ENCODE measurements at regions of chr2 and their contacts with region 1.

Region 1: GRCh38 chr2:69914170-69914960 is 544 bp upstream of the MXD1 start:
- DNase-seq: peak; percentile 98
- CTCF ChIP-seq: peak; percentile 43

Region 2: GRCh38 chr2:69893684-69894551 is 20.4 kb before region 1 on chr2 and contains the start of gene SNRNP27:
- CTCF ChIA-PET with region 1: interaction called, 15 read pairs
- POLR2A ChIA-PET with region 1: interaction called, 5 read pairs
- DNase-seq: peak; percentile 84
- CTCF ChIP-seq: no peak

Region 3: DNA sequence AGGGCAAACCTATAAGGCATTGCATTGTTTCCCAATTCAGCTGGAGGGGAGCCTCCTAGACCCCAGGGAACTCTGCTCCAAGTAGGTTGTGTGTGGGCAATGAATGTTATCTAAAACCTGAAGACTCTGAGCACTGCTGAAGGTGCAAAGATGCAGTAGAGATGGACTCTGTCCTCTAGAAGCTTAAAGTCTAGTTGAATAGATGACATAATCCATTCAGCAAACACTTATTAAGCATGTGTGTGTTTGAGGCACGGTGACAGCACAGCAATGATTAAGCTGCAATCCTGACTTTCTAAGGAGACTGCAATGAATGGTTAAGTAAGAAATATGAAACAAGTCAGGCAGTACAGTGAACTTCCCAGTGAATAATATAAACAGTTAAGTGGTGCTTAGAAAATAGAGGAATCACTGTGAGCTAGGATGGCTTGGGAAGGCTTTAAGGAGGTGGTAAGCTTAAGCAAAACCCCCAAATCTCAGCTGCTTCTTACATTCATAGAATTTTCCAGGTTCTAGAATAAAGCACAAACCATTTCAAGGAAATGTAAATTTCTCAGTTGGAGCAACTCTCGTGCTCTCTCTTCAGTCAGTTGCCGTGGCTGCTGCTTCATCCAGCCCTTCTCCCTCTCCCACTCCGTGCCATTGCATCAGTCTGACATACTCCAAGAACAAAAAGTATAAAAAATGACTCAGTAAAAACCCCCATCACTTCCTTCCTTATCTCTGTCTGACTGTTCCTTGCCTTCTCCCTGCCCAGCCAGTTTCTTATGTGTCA is 19.7 kb after region 1 on chr2:
- CTCF ChIA-PET with region 1: interaction called, 5 read pairs
- POLR2A ChIA-PET with region 1: interaction called, 10 read pairs
- DNase-seq: no peak
- CTCF ChIP-seq: no peak

Region 4: GRCh38 chr2:69955029-69955428 is 40.7 kb after region 1 on chr2:
- CTCF ChIA-PET with region 1: no interaction called
- POLR2A ChIA-PET with region 1: no interaction called
- DNase-seq: no peak
- CTCF ChIP-seq: no peak

Region 5: DNA sequence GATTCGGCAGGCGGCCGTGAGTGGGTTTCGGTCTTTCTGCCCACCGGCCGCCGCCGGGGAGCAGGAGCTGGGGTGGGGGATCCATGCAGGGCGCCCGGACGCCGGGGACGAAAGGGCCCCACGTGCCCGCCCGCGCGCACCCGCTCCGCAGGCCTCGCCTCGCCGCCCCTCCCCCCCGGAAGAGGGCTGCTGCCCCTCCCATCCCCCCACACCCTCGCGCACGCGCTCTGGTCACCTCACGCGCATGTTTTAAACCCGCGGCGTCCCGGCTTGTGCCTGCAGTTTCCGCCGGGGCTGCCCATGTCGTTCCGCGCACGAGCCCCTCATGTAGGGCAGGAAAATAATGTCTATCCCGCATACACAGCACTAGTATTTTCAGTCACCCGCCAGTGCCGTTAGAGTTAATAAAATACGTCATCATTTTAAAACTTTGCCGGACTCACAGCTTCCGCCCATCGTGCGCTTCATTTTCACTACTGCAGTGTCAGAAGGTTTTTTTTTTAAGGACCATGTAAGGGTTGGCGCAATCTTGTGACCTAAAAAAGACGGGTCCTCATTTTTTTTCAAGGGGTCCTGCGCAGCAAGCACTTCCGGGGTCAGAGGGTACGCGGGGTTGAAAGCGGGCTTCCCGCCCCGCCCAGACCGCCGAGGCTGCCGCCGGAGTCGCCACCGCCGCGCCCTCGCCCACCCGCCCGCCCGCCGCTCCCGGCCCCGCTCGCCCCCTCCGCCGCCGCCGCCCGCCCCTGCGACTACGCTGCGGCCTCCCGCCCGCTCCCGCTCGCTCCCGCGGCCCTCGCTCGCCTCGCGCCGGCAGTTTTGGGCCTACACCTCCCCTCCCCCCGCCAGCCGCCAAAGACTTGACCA is 172.7 kb after region 1 on chr2 and contains the start of gene PCBP1:
- CTCF ChIA-PET with region 1: interaction called, 32 read pairs
- POLR2A ChIA-PET with region 1: interaction called, 23 read pairs
- DNase-seq: peak; percentile 93
- CTCF ChIP-seq: no peak

Region 6: DNA sequence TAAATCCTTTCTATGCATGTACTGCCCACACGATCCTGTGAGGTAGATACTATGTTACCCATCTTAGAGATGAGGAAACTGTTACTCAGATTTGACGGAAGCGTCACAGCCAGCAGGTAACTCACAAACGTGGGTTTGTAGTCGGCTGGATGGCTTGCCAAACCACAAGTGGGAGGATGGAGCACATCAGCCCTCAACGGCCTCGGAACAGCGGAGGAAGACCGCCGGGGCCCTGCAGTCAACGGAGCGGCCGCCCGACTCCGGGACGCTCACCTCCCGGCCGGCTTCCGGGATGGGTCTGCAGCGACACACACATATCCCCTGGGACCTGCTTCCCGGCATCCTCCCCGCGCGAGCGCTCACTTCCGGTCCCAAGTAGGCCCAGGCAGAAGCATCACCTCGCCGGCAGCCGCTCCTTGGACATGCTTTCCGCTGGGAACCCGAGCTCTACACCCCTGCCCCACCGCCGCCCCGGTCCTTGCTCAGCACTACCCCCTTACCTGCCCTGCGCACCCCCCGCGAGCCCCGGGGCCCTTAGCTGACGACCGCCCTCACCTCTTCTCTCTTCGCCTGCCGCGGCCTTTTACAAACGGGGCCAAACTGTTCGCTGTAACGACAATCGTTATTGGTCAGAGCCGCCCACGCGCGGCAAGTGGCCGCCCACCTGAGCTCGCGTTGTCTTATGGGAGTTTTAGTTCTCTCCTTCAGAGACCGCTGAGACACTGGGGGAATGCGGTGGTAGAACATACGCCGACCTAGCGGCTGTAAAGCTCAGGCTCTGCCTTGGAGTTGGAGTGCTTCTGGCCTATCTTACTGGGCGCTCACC is 276.3 kb after region 1 on chr2 and contains the start of gene C2orf42:
- CTCF ChIA-PET with region 1: interaction called, 14 read pairs
- POLR2A ChIA-PET with region 1: interaction called, 14 read pairs
- DNase-seq: peak; percentile 97
- CTCF ChIP-seq: no peak